HepG2 (cell line): ENCODE measurements at regions of chr7 and their contacts with region 1.

Region 1: DNA sequence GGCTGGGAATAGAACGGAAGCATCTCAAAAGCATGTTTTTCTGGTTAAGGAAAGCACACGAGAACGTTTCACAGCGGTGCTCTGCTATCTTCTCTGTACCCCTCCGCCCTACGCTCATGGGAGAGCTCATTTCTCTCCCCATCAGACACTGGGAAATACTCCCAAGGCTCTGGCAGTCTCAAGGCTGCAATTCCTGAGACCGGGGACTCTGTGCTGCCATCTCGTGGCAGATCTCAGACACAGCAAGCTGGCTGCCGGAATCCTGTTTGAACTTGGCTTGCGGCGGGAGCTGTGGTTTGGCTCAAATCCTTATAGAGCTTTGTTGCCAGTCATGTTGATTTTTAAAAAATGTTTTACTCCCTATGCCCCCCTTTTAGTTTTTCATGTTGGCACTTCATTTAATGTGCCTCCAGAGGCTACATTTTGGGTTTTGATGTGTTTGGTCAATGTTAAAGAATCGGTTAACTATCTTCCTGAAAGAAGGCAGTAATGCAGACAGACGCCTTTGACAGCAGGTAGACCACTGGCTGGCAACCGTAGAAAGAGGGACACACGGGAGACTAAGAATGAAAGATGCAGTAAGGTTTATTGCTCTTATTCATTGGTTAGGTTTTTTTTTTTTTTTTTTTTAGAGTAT is 27.6 kb downstream of the BMPER start:
- DNase-seq: peak; percentile 35
- ATAC-seq: peak; percentile 82
- H3K4me3 ChIP-seq: no peak overlapping the region
- H3K27ac ChIP-seq: no peak overlapping the region
- H3K4me1 ChIP-seq: no peaks in the 10 kb centered on the region
- H3K27me3 ChIP-seq: peaks cover 0 to 13% of the 10 kb centered on the region in 2 experiments; a peak in 1 of 5 replicates
- CTCF ChIP-seq: peak; percentile 88
- EP300 ChIP-seq: no peak
- POLR2A ChIP-seq: no peak
- RAD21 ChIP-seq: peak; percentile 68

Region 2: DNA sequence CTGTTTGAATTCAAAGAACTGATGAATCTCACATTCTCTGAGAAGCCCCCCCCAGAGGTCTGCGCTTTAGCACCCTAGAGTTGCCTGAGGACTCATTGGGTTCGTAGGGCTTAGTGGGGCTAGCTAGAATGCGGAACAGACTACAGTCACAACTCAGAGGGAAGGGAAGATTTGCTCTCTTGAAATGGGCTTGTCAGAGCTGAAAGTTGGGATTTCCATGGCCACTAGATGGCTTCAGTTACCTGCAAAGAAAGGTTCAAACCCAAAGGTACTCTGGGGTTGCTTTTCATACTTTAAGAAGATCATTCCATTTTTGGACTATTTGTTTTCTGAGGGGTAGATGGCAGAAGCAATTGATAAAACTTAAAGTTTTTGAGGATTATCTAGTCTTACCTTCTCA is 598.6 kb before region 1 on chr7:
- CTCF ChIA-PET with region 1: no interaction called
- POLR2A ChIA-PET with region 1: no interaction called
- in situ Hi-C with region 1: no loop called
- intact Hi-C with region 1: loop called (anchors 1 kb)
- DNase-seq: peak; percentile 6
- ATAC-seq: peak; percentile 63
- H3K4me3 ChIP-seq: no peak overlapping the region
- H3K27ac ChIP-seq: no peak overlapping the region
- H3K4me1 ChIP-seq: no peaks in the 10 kb centered on the region
- H3K27me3 ChIP-seq: no peaks in the 10 kb centered on the region
- CTCF ChIP-seq: peak; percentile 71
- EP300 ChIP-seq: no peak
- POLR2A ChIP-seq: no peak
- RAD21 ChIP-seq: no peak

Region 3: DNA sequence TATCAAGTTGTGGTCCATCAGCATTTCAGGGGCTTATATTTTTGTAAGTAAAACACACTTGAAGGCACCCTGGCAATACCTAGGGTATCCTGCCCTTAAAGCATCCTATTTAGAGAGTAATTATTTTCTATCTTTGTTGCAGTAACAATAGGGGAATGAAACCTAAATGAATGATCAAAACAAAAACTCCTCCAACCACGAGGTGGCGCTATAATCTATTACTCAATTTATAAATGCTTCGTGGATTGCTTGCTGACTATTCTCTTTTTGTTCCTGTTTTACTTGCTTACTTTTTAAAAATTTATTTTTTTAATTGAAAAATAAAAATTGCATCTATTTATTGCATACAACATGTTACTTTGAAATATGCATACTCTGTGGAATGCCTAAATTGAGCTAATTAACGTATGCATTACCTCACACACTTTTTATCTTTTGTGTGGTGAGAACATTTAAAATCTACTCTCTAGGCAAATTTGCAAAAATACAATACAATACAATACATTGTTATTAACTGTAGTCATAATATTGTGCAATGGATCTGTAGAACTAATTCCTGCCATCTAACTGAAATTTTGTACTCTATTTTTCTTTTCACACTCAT is 175.3 kb before region 1 on chr7:
- CTCF ChIA-PET with region 1: no interaction called
- POLR2A ChIA-PET with region 1: no interaction called
- in situ Hi-C with region 1: no loop called
- intact Hi-C with region 1: loop called (anchors 2 kb)
- DNase-seq: peak; percentile 16
- ATAC-seq: no peak
- H3K4me3 ChIP-seq: no peak overlapping the region
- H3K27ac ChIP-seq: no peak overlapping the region
- H3K4me1 ChIP-seq: no peaks in the 10 kb centered on the region
- H3K27me3 ChIP-seq: no peaks in the 10 kb centered on the region
- CTCF ChIP-seq: peak; percentile 50
- EP300 ChIP-seq: no peak
- POLR2A ChIP-seq: no peak
- RAD21 ChIP-seq: no peak

Region 4: DNA sequence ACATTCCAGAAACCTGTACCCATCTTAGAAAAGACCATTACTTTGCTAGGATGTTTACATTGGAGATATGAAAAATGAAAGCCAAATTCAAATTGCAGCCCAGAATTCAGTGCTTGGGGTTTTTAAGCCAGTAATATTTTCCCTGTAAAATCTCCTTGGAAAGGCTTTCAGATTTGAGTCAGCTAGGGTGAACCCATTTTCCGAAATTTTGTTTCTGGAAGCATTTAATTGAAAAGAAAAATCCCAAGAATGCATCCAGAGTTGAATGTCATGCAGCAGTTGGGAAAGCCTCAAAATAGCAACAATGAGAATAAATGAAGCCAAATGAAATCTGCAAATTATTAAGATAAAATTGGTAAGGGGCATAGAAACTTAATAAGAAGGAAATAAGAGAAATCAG is 78.7 kb after region 1 on chr7:
- CTCF ChIA-PET with region 1: no interaction called
- POLR2A ChIA-PET with region 1: no interaction called
- in situ Hi-C with region 1: no loop called
- intact Hi-C with region 1: no loop called
- DNase-seq: no peak
- ATAC-seq: no peak
- H3K4me3 ChIP-seq: no peak overlapping the region
- H3K27ac ChIP-seq: no peak overlapping the region
- H3K4me1 ChIP-seq: no peaks in the 10 kb centered on the region
- H3K27me3 ChIP-seq: no peaks in the 10 kb centered on the region; a peak in 1 of 5 replicates
- CTCF ChIP-seq: no peak
- EP300 ChIP-seq: no peak
- POLR2A ChIP-seq: no peak
- RAD21 ChIP-seq: no peak